PC-3 (cell line): ENCODE measurements at regions of chr4 and their contacts with region 1.

Region 1: DNA sequence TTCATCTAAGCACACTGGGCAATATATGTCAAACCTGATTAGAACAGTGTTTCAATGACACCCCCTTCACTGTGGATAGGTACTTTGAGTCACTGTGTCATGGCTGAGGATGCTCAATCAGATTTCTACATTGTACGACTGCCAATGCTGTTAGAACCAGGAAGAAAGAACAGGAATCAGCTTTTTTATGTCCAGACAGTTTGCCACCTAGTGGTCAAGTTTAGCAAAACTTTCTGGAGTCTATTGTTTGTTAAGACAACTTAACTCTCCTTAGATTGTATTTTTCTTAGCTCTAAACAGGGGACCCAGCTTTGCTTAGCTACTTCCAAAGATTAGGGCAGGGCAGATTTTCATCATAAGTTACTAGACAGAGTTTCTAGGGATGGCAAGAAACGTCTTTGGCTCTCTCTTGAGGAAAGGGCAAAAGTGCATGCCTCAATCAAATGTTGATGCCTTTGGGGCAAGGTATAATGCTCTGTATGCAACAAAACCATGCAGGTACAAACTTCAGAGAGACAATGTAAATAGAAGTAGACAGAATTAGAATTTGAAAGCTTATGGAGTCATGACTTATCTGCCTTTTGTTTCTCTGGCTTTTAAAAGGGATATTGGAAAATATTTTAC is 40.5 kb upstream of the BMP3 start:
- DNase-seq: peak; percentile 80
- ATAC-seq: peak; percentile 58
- H3K4me3 ChIP-seq: no peak overlapping the region
- H3K27ac ChIP-seq: peak overlapping the region; percentile 55
- H3K4me1 ChIP-seq: peaks cover 36% of the 10 kb centered on the region
- H3K27me3 ChIP-seq: no peaks in the 10 kb centered on the region
- CTCF ChIP-seq: peak; percentile 78

Region 2: DNA sequence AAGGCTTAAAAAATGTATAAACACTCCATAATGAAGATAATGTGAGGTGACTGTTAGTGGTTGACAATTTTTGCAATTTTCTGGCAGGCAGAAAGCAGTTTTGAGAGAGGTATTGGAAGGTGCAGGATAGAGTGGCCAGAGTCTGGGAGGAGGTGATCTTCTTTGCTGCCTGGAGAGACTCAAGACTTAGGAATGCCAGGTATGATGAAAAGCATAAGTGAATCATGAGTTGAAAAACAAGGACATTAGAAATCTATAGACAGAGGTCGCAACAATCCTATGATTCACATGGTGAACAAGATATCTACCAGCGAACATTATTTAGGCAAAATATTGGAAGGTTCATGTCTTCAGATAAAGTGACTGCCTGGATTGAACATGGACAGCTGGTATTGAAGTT is 536.0 kb before region 1 on chr4:
- CTCF ChIA-PET with region 1: no interaction called
- POLR2A ChIA-PET with region 1: no interaction called
- intact Hi-C with region 1: loop called (anchors 5 kb)
- DNase-seq: peak; percentile 88
- ATAC-seq: peak; percentile 84
- H3K4me3 ChIP-seq: peak overlapping the region; percentile 42
- H3K27ac ChIP-seq: peak overlapping the region; percentile 90
- H3K4me1 ChIP-seq: peaks cover 51% of the 10 kb centered on the region
- H3K27me3 ChIP-seq: no peaks in the 10 kb centered on the region
- CTCF ChIP-seq: no peak

Region 3: DNA sequence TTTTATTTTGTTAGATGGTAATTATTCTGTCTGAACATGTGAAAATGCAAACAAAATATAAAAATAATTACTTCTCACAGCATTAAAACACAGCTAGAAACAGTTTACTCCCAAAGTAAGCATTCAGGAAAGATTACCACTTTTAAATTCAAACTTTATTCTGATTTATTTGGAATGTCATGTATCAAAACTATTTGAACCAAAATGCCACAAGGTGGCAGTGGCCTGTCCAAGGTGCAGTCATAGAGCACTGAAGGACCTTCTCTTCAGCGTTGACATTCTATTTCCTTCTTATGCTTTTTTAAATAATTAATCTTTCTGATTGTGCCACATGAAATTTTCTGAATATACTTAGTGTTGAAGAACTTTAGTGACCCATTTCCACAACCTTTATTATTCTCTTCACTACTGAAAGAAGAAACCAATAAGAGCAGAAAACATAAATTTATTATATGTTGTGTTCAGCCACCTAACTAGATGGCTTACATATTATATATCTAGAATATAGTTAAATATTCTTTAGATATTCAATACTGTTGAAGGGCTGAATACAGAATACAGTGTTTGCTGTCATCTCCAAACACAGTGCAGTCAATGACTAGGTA is 370.9 kb before region 1 on chr4:
- CTCF ChIA-PET with region 1: no interaction called
- POLR2A ChIA-PET with region 1: no interaction called
- intact Hi-C with region 1: loop called (anchors 2 kb)
- DNase-seq: peak; percentile 49
- ATAC-seq: 0 out of 2 replicates have a peak, but pooled peaks have one; percentile 48
- H3K4me3 ChIP-seq: no peak overlapping the region
- H3K27ac ChIP-seq: no peak overlapping the region
- H3K4me1 ChIP-seq: peaks cover 2% of the 10 kb centered on the region; the same call in 1 of the 2 replicates
- H3K27me3 ChIP-seq: no peaks in the 10 kb centered on the region
- CTCF ChIP-seq: peak; percentile 67

Region 4: GRCh38 chr4:80903020-80903419 is 87.0 kb before region 1 on chr4:
- CTCF ChIA-PET with region 1: no interaction called
- POLR2A ChIA-PET with region 1: no interaction called
- intact Hi-C with region 1: loop called (anchors 5 kb)
- DNase-seq: no peak
- ATAC-seq: no peak
- H3K4me3 ChIP-seq: no peak overlapping the region
- H3K27ac ChIP-seq: no peak overlapping the region
- H3K4me1 ChIP-seq: no peaks in the 10 kb centered on the region
- H3K27me3 ChIP-seq: no peaks in the 10 kb centered on the region
- CTCF ChIP-seq: no peak

Region 5: DNA sequence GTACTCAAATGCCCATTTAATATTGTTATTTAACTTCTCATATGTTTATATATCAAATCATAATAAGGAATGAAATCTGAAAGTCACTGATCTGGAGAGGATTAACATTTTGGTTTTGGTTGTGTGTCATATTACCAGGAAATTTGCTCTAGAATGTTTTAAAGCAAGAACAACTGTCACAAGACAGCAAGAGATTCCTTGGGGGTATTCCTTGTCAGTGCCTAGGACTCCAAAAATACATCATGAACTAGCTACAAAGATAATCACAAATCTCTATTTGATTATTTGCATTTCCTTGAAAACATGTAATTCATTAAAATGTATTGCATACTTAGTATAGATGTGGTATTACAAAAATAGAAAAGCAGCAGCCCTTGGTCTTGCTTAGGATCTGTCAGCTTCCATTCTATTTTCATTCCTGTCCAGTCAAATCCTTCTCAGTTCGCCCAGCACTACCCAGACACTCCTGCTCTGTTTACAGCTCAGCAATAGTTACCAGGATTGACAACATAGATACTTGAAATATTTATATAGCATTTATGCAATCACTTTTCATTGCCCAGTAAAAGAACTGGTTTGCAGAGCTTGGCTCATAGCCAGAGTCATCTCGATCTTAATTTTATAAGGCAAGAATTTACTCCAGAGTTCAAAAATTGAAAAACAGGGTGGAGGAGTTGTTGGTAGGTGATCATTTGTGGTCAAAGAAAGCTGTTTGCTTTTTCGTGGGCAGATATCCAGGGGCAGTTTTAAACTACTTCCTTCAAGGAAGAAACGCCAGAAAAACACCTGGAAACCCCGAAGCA is 31.3 kb after region 1 on chr4:
- CTCF ChIA-PET with region 1: no interaction called
- POLR2A ChIA-PET with region 1: no interaction called
- intact Hi-C with region 1: loop called (anchors 1 kb)
- DNase-seq: peak; percentile 94
- ATAC-seq: peak; percentile 76
- H3K4me3 ChIP-seq: peak overlapping the region; percentile 26; the same call in 1 of the 2 replicates
- H3K27ac ChIP-seq: peak overlapping the region; percentile 96
- H3K4me1 ChIP-seq: peaks cover 44% of the 10 kb centered on the region
- H3K27me3 ChIP-seq: no peaks in the 10 kb centered on the region
- CTCF ChIP-seq: no peak

Region 6: GRCh38 chr4:81040012-81040659 is 50.1 kb after region 1 on chr4:
- CTCF ChIA-PET with region 1: interaction called, 4 read pairs
- POLR2A ChIA-PET with region 1: interaction called, 3 read pairs
- intact Hi-C with region 1: loop called (anchors 2 kb)
- DNase-seq: peak; percentile 75
- ATAC-seq: peak; percentile 61
- H3K4me3 ChIP-seq: no peak overlapping the region
- H3K27ac ChIP-seq: no peak overlapping the region
- H3K4me1 ChIP-seq: peaks cover 14% of the 10 kb centered on the region
- H3K27me3 ChIP-seq: no peaks in the 10 kb centered on the region
- CTCF ChIP-seq: peak; percentile 82

Region 7: DNA sequence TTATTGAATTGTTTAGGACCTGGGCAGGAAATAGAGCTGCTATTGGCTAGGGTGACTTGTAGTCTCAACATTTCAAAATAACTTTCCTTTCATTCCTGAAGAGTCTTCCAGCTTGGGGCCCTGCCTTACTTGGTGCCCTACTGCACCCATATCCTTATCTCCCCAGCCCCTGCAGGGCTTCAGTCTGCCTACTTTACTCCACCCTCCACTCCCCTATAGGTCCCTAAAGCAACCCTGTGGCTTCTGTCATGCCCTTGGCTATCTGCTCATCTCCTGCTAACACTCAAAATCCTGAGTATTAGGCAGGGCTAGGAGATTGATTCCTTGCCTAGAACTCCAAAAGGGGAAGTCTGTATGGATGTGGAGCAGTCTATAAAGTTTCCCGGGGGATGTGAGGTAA is 282.6 kb after region 1 on chr4:
- CTCF ChIA-PET with region 1: no interaction called
- POLR2A ChIA-PET with region 1: no interaction called
- intact Hi-C with region 1: no loop called
- DNase-seq: no peak
- ATAC-seq: no peak
- H3K4me3 ChIP-seq: no peak overlapping the region
- H3K27ac ChIP-seq: no peak overlapping the region
- H3K4me1 ChIP-seq: no peaks in the 10 kb centered on the region
- H3K27me3 ChIP-seq: no peaks in the 10 kb centered on the region
- CTCF ChIP-seq: no peak